ENCODE measurements at regions of chr4 and their contacts with region 1.

Region 1: DNA sequence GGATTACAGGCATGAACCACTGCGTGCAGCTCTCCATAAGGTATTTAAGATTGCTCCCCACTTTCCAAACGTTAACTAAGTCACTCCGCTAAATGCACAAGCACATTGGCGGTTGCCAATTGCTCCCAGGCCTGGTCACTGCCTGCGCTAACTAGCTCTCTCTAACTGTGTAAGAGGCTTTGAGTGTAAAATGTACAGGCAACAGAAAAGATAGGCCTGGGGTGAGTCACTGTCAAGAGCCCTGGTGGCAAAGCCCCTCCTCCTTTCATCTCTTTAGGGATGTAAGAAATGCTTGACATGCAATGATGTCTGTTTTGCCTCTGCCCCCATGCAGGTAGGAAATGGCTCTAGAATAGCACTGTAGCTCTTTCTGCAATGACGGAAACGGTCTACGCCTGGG is 329.7 kb upstream of the GATB start:
- DNase-seq: peak; percentile 52
- ATAC-seq: peak; percentile 81
- H3K4me3 Mint-ChIP-seq: no peak overlapping the region
- H3K27ac Mint-ChIP-seq: peak overlapping the region; percentile 90
- H3K4me1 Mint-ChIP-seq: peaks cover 36% of the 10 kb centered on the region
- H3K27me3 Mint-ChIP-seq: no peaks in the 10 kb centered on the region

Region 2: GRCh38 chr4:152100379-152101201 is 10.0 kb after region 1 on chr4:
- CTCF ChIA-PET with region 1: interaction called, 9 read pairs
- POLR2A ChIA-PET with region 1: interaction called, 18 read pairs
- DNase-seq: peak; percentile 90
- ATAC-seq: peak; percentile 90
- H3K4me3 Mint-ChIP-seq: peak overlapping the region; percentile 89
- H3K27ac Mint-ChIP-seq: peak overlapping the region; percentile 100
- H3K4me1 Mint-ChIP-seq: peaks cover 83% of the 10 kb centered on the region
- H3K27me3 Mint-ChIP-seq: no peaks in the 10 kb centered on the region